Aorta (tissue), 5 donors: ENCODE measurements at regions of chr21 and their contacts with region 1.

Region 1: GRCh38 chr21:28336314-28336713 is 656.4 kb downstream of the LTN1 start:
- DNase-seq: no peak
- ATAC-seq: no peak
- H3K4me3 ChIP-seq: no peak overlapping the region
- H3K27ac ChIP-seq: no peak overlapping the region
- H3K4me1 ChIP-seq: no peaks in the 10 kb centered on the region
- H3K27me3 ChIP-seq: no peaks in the 10 kb centered on the region

Region 2: GRCh38 chr21:26850108-26850643 is 1486.1 kb before region 1 on chr21:
- intact Hi-C with region 1: loop called in 1 of 2 experiments (anchors 5 kb)
- DNase-seq: no peak
- ATAC-seq: no peak
- H3K4me3 ChIP-seq: no peak overlapping the region
- H3K27ac ChIP-seq: no peak overlapping the region
- H3K4me1 ChIP-seq: no peaks in the 10 kb centered on the region
- H3K27me3 ChIP-seq: no peaks in the 10 kb centered on the region